ENCODE measurements at regions of chr5 and their contacts with region 1.

Region 1: GRCh38 chr5:150778517-150779396 is at the start of gene SMIM3:
- DNase-seq: peak; percentile 53 to 79
- ATAC-seq: peak; percentile 59 to 72 (median 65)
- H3K4me3 ChIP-seq: peak within 1 kb of the TSS; percentile 80
- H3K4me3 Mint-ChIP-seq: peak within 1 kb of the TSS; percentile 91
- H3K27ac ChIP-seq: peak within 1 kb of the TSS; percentile 54
- H3K27ac Mint-ChIP-seq: peak within 1 kb of the TSS; percentile 47 to 93
- H3K4me1 ChIP-seq: peaks cover 45% of the 10 kb centered on the region
- H3K4me1 Mint-ChIP-seq: peaks cover 51 to 56% of the 10 kb centered on the region in 2 donors
- H3K27me3 ChIP-seq: no peaks in the 10 kb centered on the region
- H3K27me3 Mint-ChIP-seq: peaks cover 0 to 8% of the 10 kb centered on the region in 2 donors
- CTCF ChIP-seq: peak; percentile 19
- total RNA-seq, gene SMIM3: 7.0 to 9.4 (median 8.9) TPM

Region 2: GRCh38 chr5:150092159-150092787 is 686.5 kb before region 1 on chr5:
- intact Hi-C with region 1: no loop called
- DNase-seq: no peak
- ATAC-seq: peak in 1 of 3 donors; percentile 32
- H3K4me3 ChIP-seq: no peak overlapping the region
- H3K4me3 Mint-ChIP-seq: no peak overlapping the region
- H3K27ac ChIP-seq: no peak overlapping the region
- H3K27ac Mint-ChIP-seq: no peak overlapping the region
- H3K4me1 ChIP-seq: no peaks in the 10 kb centered on the region
- H3K4me1 Mint-ChIP-seq: no peaks in the 10 kb centered on the region
- H3K27me3 ChIP-seq: peaks cover 3% of the 10 kb centered on the region
- H3K27me3 Mint-ChIP-seq: peaks cover 37 to 74% of the 10 kb centered on the region in 2 donors
- CTCF ChIP-seq: no peak

Region 3: DNA sequence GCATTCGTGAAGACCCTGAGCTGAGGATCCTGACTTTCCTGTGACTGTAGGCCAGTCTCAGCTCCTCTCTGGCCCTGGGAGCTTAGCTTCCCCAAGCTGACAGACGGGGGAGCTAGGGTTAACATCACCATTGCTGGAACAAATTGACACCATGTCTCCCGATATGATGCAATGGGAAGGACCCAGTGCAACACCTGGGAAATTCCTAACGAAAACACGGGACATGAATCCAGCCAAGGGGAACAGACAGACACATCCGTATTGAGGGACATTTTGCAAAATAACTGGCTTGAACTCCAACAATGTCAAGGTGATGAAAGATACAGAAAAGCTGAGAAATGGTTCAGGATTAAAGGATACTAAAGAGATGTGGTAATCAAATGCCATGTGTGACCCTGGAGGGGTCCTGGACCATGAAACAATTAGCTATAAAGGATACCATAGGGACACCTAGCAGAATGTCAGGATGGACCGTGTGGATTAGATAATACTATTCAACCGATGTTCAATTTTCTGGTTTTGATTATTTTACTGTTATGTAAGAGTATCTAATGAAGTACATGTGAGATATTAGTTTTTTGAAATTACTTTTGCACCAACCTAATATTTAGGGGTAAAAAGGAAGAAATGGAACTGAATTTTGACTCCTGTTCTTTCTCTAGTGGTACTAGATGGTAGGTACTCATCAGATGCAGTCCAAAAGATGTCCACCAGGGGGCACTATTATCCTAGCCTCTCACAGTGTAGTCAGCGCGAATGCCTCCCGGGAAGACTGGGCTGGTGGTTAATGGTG is 218.2 kb before region 1 on chr5:
- intact Hi-C with region 1: loop called (anchors 2 kb)
- DNase-seq: peak; percentile 70 to 92
- ATAC-seq: peak; percentile 93 to 99 (median 99)
- H3K4me3 ChIP-seq: no peak overlapping the region
- H3K4me3 Mint-ChIP-seq: no peak overlapping the region
- H3K27ac ChIP-seq: no peak overlapping the region
- H3K27ac Mint-ChIP-seq: no peak overlapping the region
- H3K4me1 ChIP-seq: no peaks in the 10 kb centered on the region
- H3K4me1 Mint-ChIP-seq: no peaks in the 10 kb centered on the region
- H3K27me3 ChIP-seq: no peaks in the 10 kb centered on the region
- H3K27me3 Mint-ChIP-seq: no peaks in the 10 kb centered on the region
- CTCF ChIP-seq: peak; percentile 95

Region 4: DNA sequence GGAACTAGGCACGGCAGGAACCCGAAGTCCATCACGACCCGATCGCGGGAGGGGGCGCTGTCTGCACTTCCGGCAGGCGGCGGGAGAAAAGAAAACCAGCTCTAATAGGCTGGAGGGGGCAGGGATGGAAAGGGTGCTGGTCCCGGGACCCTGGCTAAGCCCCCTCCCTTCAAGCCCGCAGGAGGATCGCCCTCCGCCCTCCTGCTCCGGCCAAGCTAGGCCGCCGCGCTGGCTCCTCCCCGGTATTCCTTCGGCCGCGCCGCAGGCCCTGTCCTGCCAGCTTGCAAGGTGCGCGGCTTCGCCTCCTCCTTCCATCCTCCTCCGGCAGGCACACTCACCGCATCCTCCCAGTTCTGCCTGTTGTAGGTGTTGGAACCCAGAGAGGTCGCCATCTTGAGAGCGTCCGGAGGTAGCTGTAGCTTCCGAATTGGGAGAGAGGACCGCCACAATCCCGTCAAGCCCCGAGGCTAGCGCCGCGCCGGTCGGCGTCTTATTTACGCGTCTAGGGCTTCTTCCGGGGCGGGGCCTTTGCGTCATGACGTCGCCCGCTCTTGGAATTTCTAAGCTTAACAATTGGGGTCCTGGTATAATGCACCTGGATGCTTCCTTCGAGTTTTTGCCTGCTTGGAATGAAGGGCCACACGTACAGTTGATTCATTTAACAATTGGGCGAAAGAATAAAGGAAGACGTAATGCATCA is 78.0 kb before region 1 on chr5 and contains the start of gene RBM22:
- intact Hi-C with region 1: loop called (anchors 1 kb)
- DNase-seq: peak; percentile 90 to 96
- ATAC-seq: peak; percentile 90 to 97 (median 95)
- H3K4me3 ChIP-seq: peak within 1 kb of the TSS; percentile 90
- H3K4me3 Mint-ChIP-seq: no peak within 1 kb of the TSS
- H3K27ac ChIP-seq: peak within 1 kb of the TSS; percentile 92
- H3K27ac Mint-ChIP-seq: no peak within 1 kb of the TSS
- H3K4me1 ChIP-seq: peaks cover 5% of the 10 kb centered on the region
- H3K4me1 Mint-ChIP-seq: peaks cover 7 to 15% of the 10 kb centered on the region in 2 donors
- H3K27me3 ChIP-seq: peaks cover 2% of the 10 kb centered on the region
- H3K27me3 Mint-ChIP-seq: no peaks in the 10 kb centered on the region
- CTCF ChIP-seq: peak; percentile 85
- total RNA-seq, gene RBM22: 136 to 149 (median 145) TPM

Region 5: DNA sequence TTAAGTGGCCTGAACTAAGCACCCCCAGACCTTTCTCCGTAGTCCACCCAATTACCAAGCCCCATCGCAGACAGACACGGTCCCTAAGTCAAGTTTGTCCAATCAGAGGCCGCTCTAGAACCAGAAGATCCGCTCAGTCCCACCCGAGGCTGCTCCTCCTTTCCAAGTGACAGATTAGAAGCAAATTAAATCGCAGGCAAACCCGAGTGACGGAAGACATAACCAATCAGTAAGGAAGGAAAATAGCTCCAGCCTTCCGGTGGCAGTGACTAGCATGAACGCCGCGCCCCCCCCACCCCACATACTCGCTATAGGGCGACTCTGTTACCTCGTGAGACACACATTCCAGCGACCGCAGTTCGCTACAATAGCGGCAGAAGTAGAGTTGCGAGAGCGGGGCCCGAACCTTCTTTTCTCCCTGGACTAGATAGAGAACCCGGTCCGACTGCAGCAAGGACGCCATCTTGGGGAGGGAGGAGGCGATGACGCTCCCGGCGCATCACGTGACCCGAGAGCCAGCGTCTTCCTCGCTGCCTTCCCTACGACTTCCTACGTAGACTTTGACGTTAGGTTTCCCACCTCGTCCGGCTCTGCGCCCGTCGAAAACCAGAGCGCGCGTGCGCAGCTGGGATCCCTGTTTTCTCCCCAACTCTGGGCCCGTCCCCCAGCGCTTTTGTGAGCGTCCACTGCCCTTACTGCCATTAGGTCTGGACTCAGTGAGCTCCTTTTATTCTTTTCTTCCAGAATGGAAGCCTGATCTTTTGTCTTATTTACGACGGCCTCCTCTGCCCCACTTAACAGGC is 20.0 kb before region 1 on chr5 and contains the start of gene DCTN4:
- intact Hi-C with region 1: loop called (anchors 1 kb)
- DNase-seq: peak; percentile 90 to 99
- ATAC-seq: peak; percentile 89 to 97 (median 90)
- H3K4me3 ChIP-seq: peak within 1 kb of the TSS; percentile 83
- H3K4me3 Mint-ChIP-seq: no peak within 1 kb of the TSS
- H3K27ac ChIP-seq: peak within 1 kb of the TSS; percentile 97
- H3K27ac Mint-ChIP-seq: no peak within 1 kb of the TSS
- H3K4me1 ChIP-seq: peaks cover 14% of the 10 kb centered on the region
- H3K4me1 Mint-ChIP-seq: peaks cover 15 to 32% of the 10 kb centered on the region in 2 donors
- H3K27me3 ChIP-seq: no peaks in the 10 kb centered on the region
- H3K27me3 Mint-ChIP-seq: peaks cover 4 to 14% of the 10 kb centered on the region in 2 donors
- CTCF ChIP-seq: no peak
- total RNA-seq, gene DCTN4: 90.0 to 108 (median 92.0) TPM

Region 6: GRCh38 chr5:150816946-150817345 is 38.2 kb after region 1 on chr5:
- intact Hi-C with region 1: no loop called
- DNase-seq: no peak
- ATAC-seq: no peak
- H3K4me3 ChIP-seq: no peak overlapping the region
- H3K4me3 Mint-ChIP-seq: no peak overlapping the region
- H3K27ac ChIP-seq: no peak overlapping the region
- H3K27ac Mint-ChIP-seq: no peak overlapping the region
- H3K4me1 ChIP-seq: no peaks in the 10 kb centered on the region
- H3K4me1 Mint-ChIP-seq: no peaks in the 10 kb centered on the region
- H3K27me3 ChIP-seq: no peaks in the 10 kb centered on the region
- H3K27me3 Mint-ChIP-seq: peaks cover 3 to 29% of the 10 kb centered on the region in 2 donors
- CTCF ChIP-seq: no peak

Measured in natural killer cell (primary cell).